ENCODE measurements at regions of chr19 and their contacts with region 1.

Region 1: GRCh38 chr19:33245948-33246708 is 20.5 kb upstream of the SLC7A10 start:
- DNase-seq: no peak
- H3K4me3 ChIP-seq: no peak overlapping the region
- CTCF ChIP-seq: peak; percentile 49

Region 2: DNA sequence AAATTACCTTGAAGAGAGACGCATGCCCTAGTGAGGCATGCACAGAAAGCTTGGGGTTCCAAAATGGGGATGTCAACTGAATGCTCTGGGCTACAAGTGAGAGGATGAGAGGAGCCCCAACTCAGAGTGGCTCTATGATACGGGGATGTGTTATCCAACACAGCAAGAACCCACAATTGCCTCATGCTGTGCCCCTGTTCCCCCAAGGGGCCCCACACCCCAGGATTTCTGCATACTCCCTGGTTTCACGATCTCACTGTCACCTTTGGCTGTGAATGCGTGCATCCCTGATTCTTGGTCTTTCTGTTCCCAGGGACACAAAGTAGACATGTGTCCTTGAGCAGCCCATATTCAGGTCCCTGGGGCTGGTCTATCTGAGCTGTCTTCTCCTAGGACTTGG is 84.9 kb before region 1 on chr19:
- in situ Hi-C with region 1: no loop called
- DNase-seq: no peak
- H3K4me3 ChIP-seq: no peak overlapping the region
- CTCF ChIP-seq: no peak

Region 3: DNA sequence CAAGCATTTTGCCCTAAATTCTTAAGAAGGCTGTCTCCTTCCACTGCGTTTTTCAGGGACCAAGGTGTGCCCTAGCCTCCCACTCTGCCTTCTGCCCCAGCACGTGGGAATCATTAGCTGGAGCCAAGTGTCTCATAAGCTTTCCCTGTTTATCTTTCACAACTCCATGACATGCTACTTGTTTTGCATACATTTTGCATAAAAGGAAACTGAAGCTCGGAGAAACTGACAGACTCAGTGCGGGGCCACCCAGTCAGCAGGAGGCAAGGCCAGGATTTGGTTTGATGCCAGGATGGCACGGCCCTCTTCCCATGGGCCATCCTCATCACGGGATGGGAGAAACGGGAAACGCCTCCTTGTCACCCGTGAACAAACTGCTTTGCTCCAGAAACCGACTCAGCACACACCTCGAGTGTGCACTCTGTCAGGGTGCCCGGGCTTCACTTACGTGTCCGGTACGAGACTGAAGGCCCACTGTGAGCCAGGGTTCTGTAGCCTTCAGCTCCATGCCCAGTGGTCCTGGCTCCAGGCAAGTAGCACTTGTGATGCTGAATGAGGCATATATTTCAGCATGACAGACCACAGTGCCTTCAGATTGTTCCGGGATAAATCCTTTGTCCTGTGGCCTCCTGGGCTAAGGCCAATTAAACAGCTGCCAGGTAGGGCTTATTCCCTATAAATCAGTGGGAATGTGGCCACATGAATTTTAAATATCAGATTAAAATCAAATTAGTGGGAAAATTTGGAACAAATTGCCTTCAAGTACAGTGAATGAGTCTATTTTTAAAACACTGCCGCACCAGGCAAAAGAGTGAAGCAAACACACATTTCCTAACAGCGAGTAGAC is 46.7 kb after region 1 on chr19:
- in situ Hi-C with region 1: loop called (anchors 5 kb)
- DNase-seq: peak; percentile 51
- H3K4me3 ChIP-seq: no peak overlapping the region
- CTCF ChIP-seq: no peak